Tibial artery (tissue), 4 donors: ENCODE measurements at regions of chr2 and their contacts with region 1.

Region 1: DNA sequence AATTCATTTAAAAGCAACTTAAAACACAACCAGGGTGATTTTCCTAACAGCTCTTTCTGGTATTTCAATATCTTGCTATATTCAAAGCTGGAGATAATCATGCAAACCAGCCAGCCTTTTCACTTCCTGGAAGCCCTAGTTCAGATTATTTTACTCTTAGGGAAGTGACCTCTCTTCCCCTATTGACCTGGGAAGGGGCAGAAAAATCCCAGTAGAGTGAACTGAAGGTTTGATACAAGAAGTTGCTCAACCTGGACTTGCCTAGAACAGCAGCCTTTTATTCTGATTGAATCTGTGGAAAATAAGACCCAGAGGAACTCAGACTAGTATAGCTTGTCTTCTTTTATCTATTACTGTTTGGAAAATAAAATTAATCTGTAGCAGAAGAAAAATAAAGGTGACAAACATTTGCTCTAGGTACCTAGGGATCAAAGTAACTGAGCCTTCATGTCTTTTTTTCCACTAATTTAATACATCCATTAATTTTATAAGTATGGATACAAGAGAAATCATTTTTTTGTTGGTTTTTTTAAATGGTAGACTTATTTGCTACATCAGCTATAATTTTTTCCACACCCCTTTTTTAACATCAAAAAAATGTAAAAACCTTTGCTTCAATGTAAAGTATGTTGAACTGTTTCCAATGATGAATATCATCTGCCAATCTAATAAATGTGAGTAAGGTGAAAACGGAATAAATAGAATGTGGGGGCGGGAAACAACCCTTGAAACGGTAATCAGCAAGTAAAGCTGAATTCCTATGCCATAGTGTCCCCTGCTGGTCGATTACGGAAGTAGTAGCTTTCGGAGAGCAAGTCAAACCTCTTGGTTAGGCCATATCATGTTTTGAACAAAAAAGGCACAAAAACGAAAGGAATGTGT is 629.9 kb downstream of the NRXN1 start:
- DNase-seq: peak in 1 of 2 donors; percentile 20
- H3K4me3 ChIP-seq: no peak overlapping the region
- H3K27ac ChIP-seq: no peak overlapping the region
- H3K4me1 ChIP-seq: no peaks in the 10 kb centered on the region
- H3K27me3 ChIP-seq: no peaks in the 10 kb centered on the region
- CTCF ChIP-seq: peak; percentile 64 to 72

Region 2: DNA sequence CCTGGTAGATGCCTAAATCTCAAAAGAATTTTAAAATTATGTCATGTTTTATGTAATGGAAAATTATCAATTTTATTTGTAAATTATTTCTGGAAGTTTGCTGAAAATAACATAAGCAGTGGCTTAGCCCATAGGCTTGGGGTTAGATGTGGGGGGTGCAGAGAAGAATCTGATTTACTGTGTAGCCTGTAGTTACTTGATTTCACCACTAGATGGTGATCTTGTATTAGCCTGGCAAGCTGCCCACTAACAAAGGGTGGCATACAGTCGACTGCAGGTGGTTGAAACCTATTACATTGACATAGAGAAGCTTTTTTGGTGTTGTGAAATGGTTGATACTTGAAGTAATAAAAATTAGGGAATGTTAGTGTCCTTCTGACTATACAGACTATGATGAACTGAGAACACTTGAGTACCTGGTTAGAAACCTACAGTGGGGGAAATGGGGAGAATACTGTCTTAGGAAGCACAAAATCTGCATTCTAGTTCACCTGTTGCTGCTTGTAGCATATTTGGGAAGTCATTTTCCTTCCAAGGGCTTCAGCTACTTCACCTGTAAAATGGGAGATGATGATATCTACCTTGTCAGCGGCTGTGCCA is 1455.5 kb before region 1 on chr2:
- intact Hi-C with region 1: loop called (anchors 10 kb)
- DNase-seq: no peak
- H3K4me3 ChIP-seq: no peak overlapping the region
- H3K27ac ChIP-seq: no peak overlapping the region
- H3K4me1 ChIP-seq: peaks cover 0 to 3% (median 0%) of the 10 kb centered on the region in 4 donors
- H3K27me3 ChIP-seq: no peaks in the 10 kb centered on the region
- CTCF ChIP-seq: peak; percentile 81 to 89

Region 3: DNA sequence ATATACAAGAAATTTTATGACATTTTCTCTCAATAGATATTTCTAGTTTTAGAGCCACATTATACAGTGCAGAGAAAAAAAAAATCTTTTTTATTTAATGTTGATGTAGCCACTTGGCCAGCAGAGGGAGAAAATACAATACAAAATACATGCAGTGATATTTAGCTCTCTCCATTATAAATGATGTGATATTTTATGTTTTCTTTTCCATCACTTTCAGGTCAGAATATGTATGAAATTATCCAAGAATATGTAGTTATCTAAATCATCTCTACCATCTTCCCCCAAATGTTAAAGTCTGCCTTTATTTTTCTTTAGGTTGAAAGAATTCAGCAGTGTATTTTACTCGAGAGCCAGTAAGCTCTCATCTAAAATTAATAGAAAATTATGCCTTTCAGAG is 714.1 kb before region 1 on chr2:
- intact Hi-C with region 1: loop called (anchors 10 kb)
- DNase-seq: no peak
- H3K4me3 ChIP-seq: no peak overlapping the region
- H3K27ac ChIP-seq: no peak overlapping the region
- H3K4me1 ChIP-seq: no peaks in the 10 kb centered on the region
- H3K27me3 ChIP-seq: no peaks in the 10 kb centered on the region
- CTCF ChIP-seq: peak in 1 of 2 experiments; percentile 20

Region 4: DNA sequence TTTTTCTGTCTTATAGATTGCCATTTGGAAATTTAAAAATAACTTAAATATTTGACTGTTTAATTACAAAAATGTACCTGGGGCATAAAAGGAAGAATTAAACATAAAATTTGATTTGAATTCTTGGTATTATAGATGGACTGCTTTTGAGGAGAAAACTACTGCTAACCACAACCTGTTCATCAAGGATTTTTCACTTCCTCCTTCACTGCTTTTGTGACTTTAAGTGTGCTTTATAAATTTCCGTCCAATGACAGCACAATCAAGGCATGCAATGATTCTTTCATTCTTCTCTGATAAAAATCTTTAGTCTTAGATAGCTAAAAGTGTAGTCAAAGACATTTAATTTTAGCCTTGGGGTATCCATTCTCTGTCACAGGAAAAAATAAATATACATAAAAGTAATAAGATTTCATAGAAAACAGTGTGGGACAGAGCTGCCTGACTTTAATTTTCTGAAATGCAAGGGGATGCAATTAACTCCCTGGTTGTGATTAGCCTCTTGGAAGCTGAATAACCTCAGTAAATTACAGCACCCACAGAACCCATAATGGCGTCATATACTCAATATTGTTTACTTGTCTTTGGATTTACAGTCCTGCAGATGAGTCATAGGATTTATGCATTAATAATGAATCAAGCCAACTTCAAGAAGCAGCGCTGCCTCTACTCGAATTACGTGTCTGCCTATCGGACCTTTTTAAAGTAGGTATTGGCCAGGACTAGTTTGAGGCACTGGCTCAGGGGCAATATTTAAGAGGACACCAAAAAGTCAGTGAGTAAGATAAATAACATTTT is 42.1 kb after region 1 on chr2:
- intact Hi-C with region 1: no loop called
- DNase-seq: no peak
- H3K4me3 ChIP-seq: no peak overlapping the region
- H3K27ac ChIP-seq: no peak overlapping the region
- H3K4me1 ChIP-seq: no peaks in the 10 kb centered on the region
- H3K27me3 ChIP-seq: no peaks in the 10 kb centered on the region
- CTCF ChIP-seq: no peak